ENCODE measurements at regions of chr1 and their contacts with region 1.

Region 1: GRCh38 chr1:38953433-38953860 is 11.8 kb upstream of the RHBDL2 start:
- DNase-seq: peak; percentile 57
- H3K4me3 ChIP-seq: no peak overlapping the region
- H3K27ac ChIP-seq: peak overlapping the region; percentile 25
- H3K4me1 ChIP-seq: peaks cover 17% of the 10 kb centered on the region
- H3K27me3 ChIP-seq: no peaks in the 10 kb centered on the region
- CTCF ChIP-seq: no peak

Region 2: GRCh38 chr1:38964140-38964548 is 10.7 kb after region 1 on chr1:
- CTCF ChIA-PET with region 1: no interaction called
- dilution Hi-C with region 1: no loop called
- in situ Hi-C with region 1: no loop called
- intact Hi-C with region 1: loop called (anchors 1 kb)
- DNase-seq: no peak
- H3K4me3 ChIP-seq: no peak overlapping the region
- H3K27ac ChIP-seq: no peak overlapping the region
- H3K4me1 ChIP-seq: peaks cover 34% of the 10 kb centered on the region
- H3K27me3 ChIP-seq: no peaks in the 10 kb centered on the region
- CTCF ChIP-seq: peak; percentile 19 to 51

Region 3: GRCh38 chr1:39105061-39105840 is 151.8 kb after region 1 on chr1:
- CTCF ChIA-PET with region 1: no interaction called
- dilution Hi-C with region 1: no loop called
- in situ Hi-C with region 1: no loop called
- intact Hi-C with region 1: no loop called
- DNase-seq: peak; percentile 76
- H3K4me3 ChIP-seq: peak overlapping the region; percentile 50 to 76 (median 63)
- H3K27ac ChIP-seq: peak overlapping the region; percentile 93
- H3K4me1 ChIP-seq: peaks cover 49% of the 10 kb centered on the region
- H3K27me3 ChIP-seq: no peaks in the 10 kb centered on the region
- CTCF ChIP-seq: no peak

Measured in mammary epithelial cell (primary cell).